PC-3 (cell line): ENCODE measurements at regions of chr3 and their contacts with region 1.

Region 1: DNA sequence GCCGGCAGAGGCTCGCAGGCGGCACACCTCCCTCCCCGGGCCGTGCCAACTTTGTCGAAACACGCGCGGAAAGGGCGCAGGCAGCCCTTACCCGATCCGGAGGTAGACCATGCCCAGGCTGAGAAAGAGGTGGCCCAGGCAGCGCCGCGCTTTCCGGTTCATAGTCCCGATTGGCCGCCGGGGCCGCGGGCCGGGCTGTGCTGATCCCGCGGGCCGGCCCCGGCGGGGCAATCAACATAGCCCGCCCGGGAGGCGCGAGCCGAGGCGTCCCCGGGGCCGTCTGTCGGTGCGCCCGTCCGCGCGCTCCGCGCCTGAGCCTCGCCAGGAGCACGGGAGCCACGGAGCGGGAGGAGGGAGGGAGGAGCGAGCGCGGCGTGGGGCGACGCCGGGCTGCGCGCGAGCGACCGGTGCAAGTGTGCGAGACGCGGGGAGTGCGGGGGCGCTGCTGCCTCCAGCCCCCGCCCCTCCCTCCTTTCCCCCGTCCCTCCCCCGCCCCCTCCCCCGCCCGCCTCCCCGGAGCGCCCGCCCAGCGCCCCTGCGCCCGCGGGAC is at the start of gene WNT7A:
- DNase-seq: peak; percentile 26
- ATAC-seq: peak; percentile 25
- H3K4me3 ChIP-seq: peak within 1 kb of the TSS; percentile 87
- H3K27ac ChIP-seq: no peak within 1 kb of the TSS
- H3K4me1 ChIP-seq: no peaks in the 10 kb centered on the region
- H3K27me3 ChIP-seq: no peaks in the 10 kb centered on the region
- CTCF ChIP-seq: no peak; the same call in 1 of the 2 replicates
- total RNA-seq, gene WNT7A: 16.2 and 18.1 TPM in 2 replicates

Region 2: GRCh38 chr3:12905316-12906071 is 974.2 kb before region 1 on chr3:
- CTCF ChIA-PET with region 1: no interaction called
- POLR2A ChIA-PET with region 1: no interaction called
- intact Hi-C with region 1: no loop called
- DNase-seq: no peak
- ATAC-seq: no peak
- H3K4me3 ChIP-seq: no peak overlapping the region
- H3K27ac ChIP-seq: no peak overlapping the region
- H3K4me1 ChIP-seq: no peaks in the 10 kb centered on the region
- H3K27me3 ChIP-seq: no peaks in the 10 kb centered on the region
- CTCF ChIP-seq: no peak

Region 3: DNA sequence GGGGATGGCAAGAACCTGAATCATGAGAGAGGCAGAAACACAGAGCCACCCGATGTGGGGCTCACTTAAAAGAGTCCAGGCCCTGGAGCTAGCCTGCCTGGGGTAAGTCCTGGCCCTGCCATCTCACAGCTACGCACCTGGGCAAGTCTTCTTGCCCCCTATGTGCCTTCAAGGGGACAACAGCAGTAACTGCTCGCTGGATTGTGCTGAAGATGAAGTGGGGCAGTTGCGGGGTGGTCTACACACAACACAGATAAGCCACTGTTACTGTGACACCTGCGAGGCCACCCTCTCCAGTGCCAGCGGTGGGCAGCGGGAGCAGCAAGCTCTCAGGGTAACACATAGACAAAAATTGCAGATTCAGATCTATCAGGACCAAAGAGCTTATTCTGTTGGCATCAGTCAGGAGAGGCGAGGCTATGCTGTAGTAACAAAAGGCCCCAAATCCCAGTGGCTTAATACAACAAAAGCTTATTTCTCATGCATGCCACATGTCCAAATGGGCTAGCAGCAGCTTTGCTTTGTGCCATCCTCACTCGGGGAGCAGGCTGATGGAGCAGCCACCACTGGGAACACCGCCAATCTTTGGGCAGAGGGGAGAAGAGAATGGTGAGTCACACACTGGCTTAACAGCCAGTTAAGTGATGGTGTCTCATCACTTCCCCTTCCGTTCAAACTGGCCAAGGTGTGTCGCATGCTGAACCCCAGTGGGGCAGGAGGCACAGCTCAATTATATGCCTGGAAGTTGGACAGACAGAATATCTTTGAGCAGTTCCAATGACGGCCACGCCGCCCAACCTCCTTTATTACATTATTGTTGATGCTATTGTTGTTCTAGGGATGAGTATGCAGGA is 78.1 kb before region 1 on chr3:
- CTCF ChIA-PET with region 1: interaction called, 5 read pairs
- POLR2A ChIA-PET with region 1: interaction called, 3 read pairs
- intact Hi-C with region 1: loop called (anchors 1 kb)
- DNase-seq: peak; percentile 99
- ATAC-seq: peak; percentile 95
- H3K4me3 ChIP-seq: no peak overlapping the region
- H3K27ac ChIP-seq: peak overlapping the region; percentile 88
- H3K4me1 ChIP-seq: peaks cover 20% of the 10 kb centered on the region
- H3K27me3 ChIP-seq: no peaks in the 10 kb centered on the region
- CTCF ChIP-seq: no peak

Region 4: GRCh38 chr3:13839726-13840320 is 39.9 kb before region 1 on chr3:
- CTCF ChIA-PET with region 1: no interaction called
- POLR2A ChIA-PET with region 1: no interaction called
- intact Hi-C with region 1: loop called (anchors 5 kb)
- DNase-seq: peak; percentile 64
- ATAC-seq: peak; percentile 49
- H3K4me3 ChIP-seq: no peak overlapping the region
- H3K27ac ChIP-seq: peak overlapping the region; percentile 68
- H3K4me1 ChIP-seq: peaks cover 31% of the 10 kb centered on the region
- H3K27me3 ChIP-seq: no peaks in the 10 kb centered on the region
- CTCF ChIP-seq: no peak

Region 5: DNA sequence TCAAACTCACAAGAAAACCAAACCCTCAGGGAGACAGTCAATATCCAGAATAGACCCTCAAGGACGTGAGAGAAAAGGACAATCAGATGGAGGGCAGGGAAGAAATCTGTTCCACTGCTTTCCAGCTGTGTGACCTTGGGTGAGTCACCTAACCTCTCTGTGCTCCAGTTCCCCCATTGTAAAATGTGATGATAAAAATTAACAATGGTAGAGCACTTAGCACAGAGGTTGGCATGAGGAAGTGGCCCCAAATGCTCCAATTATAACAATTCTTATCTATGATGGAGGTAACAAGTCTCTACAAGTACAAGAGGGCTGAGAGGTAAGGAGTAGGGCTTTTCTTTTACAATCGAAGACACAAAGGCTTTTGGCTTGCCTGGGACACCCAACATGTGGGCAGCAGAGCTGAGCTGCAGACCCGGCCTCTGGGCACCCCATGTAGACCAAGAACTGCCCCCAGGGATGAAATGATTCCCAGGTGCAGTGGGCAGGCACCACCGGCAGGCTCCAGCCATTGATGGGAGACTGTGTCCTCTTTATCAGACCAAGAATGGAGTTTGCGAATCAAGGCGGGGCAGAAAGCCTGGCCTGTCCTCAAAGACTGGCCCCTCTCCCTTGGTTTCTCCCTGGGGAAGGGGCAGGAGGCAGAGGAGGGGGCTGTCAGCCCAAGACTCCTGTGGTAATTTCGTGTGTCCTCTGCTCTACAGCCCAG is 21.9 kb before region 1 on chr3:
- CTCF ChIA-PET with region 1: no interaction called
- POLR2A ChIA-PET with region 1: no interaction called
- intact Hi-C with region 1: no loop called
- DNase-seq: no peak
- ATAC-seq: no peak
- H3K4me3 ChIP-seq: no peak overlapping the region
- H3K27ac ChIP-seq: no peak overlapping the region
- H3K4me1 ChIP-seq: peaks cover 18% of the 10 kb centered on the region
- H3K27me3 ChIP-seq: no peaks in the 10 kb centered on the region
- CTCF ChIP-seq: no peak

Region 6: DNA sequence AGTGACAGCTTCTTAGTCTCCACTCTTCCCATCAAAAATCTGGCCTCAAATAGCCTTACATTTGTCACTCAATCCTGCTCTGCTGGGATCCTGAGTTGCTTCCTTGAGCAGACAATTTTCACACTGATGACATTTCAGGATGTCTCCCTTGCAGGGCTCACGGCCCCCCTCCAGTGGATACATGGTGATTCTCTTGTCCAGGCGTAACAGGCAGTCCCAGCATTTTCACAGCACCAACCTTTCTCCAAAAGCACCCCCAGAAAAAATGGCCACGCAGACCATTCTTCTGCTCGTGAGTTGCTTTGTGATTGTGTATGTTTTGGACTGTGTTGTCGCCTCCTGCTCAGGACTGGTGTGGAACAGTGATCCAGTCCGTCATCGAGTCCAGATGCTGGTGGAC is 47.6 kb after region 1 on chr3:
- CTCF ChIA-PET with region 1: no interaction called
- POLR2A ChIA-PET with region 1: no interaction called
- intact Hi-C with region 1: no loop called
- DNase-seq: peak; percentile 44
- ATAC-seq: peak; percentile 90
- H3K4me3 ChIP-seq: no peak overlapping the region
- H3K27ac ChIP-seq: no peak overlapping the region
- H3K4me1 ChIP-seq: no peaks in the 10 kb centered on the region
- H3K27me3 ChIP-seq: no peaks in the 10 kb centered on the region
- CTCF ChIP-seq: peak; percentile 64